Mammary epithelial cell (primary cell): ENCODE measurements at regions of chr1 and their contacts with region 1.

Region 1: GRCh38 chr1:12124693-12125421 is 41.9 kb upstream of the TNFRSF1B start:
- DNase-seq: peak; percentile 41
- H3K4me3 ChIP-seq: no peak overlapping the region
- H3K27ac ChIP-seq: no peak overlapping the region
- H3K4me1 ChIP-seq: no peaks in the 10 kb centered on the region
- H3K27me3 ChIP-seq: peaks cover 3% of the 10 kb centered on the region
- CTCF ChIP-seq: peak; percentile 94 to 95

Region 2: DNA sequence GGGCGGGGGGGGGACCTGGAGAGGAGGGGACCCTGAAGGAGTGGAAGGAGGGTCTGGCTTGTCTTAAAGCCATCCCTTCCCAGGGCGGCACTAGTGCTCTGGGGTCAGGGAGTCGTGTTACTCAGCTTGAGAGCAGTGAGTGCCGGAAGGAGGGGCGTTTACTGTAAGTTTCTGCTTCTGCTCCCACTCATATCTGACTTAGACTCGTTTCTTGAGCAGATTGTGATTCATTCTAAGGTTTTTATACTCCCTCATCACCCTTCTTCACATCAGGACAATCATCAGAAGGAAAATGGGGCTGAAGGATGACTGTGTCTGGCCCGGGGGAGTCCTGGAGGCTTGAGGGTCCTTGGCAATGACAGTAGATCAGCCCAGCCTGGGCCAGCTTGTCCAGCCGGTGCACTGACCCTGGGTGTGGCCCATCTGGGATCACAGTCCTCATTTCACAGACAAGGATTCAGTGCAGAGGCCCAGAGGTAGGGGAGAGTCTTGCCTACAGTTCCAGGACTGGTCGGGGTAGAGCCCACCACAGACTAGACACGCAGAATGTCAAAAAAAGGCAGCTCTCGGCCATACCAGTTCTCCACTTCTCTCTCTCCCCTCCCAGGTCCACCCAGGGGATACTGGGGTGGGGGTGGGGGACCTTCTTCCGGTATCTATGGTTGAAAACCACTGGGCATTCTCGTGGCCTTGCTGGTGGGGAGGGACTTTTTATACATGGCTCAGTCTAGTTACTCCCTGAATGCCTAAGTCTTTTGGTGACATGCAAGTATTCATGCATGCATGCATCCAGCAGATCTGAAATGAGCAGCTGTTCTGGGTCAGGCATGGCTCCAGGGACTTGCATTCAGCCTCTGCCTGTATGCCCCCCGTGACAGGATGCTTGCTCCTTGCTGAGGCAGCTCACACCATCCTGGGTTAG is 56.7 kb before region 1 on chr1:
- CTCF ChIA-PET with region 1: no interaction called
- dilution Hi-C with region 1: no loop called
- in situ Hi-C with region 1: no loop called
- intact Hi-C with region 1: no loop called
- DNase-seq: no peak
- H3K4me3 ChIP-seq: no peak overlapping the region
- H3K27ac ChIP-seq: no peak overlapping the region
- H3K4me1 ChIP-seq: peaks cover 6% of the 10 kb centered on the region
- H3K27me3 ChIP-seq: peaks cover 26% of the 10 kb centered on the region
- CTCF ChIP-seq: no peak

Region 3: GRCh38 chr1:12191242-12192032 is 66.6 kb after region 1 on chr1:
- CTCF ChIA-PET with region 1: interaction called, 8 read pairs
- dilution Hi-C with region 1: loop called (anchors 5 kb)
- in situ Hi-C with region 1: no loop called
- intact Hi-C with region 1: no loop called
- DNase-seq: no peak
- H3K4me3 ChIP-seq: no peak overlapping the region
- H3K27ac ChIP-seq: no peak overlapping the region
- H3K4me1 ChIP-seq: no peaks in the 10 kb centered on the region
- H3K27me3 ChIP-seq: peaks cover 3% of the 10 kb centered on the region
- CTCF ChIP-seq: no peak